PC-9 (cell line): ENCODE measurements at regions of chr9 and their contacts with region 1.

Region 1: DNA sequence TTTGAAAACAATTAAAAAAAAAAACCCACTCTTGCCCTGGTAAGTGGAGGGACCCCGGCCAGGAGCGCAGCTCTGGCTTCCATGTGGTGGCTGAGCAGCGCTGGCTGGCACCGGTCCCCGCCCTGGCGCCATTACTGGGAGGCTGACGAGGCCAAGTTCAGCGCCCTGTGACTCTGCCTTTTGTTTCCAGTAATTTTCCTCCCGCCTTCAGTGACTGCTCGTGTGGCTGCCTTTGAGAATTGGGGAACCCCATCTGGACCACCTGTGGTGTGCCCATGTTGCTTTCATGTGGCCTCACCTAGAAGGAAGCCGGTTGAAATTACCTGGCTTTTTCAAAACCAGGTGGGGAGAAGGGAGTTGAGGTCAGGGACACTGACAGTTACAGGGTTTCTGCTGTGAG is 136.1 kb downstream of the GAPVD1 start:
- DNase-seq: no peak
- H3K4me3 ChIP-seq: no peak overlapping the region
- H3K27ac ChIP-seq: no peak overlapping the region
- H3K4me1 ChIP-seq: no peaks in the 10 kb centered on the region
- H3K27me3 ChIP-seq: no peaks in the 10 kb centered on the region
- CTCF ChIP-seq: no peak

Region 2: GRCh38 chr9:125189361-125190289 is 208.1 kb before region 1 on chr9 and contains the start of gene PPP6C:
- CTCF ChIA-PET with region 1: no interaction called
- POLR2A ChIA-PET with region 1: interaction called, 10 read pairs
- intact Hi-C with region 1: no loop called
- DNase-seq: peak; percentile 83 to 97
- H3K4me3 ChIP-seq: peak within 1 kb of the TSS; percentile 99
- H3K27ac ChIP-seq: peak within 1 kb of the TSS; percentile 60
- H3K4me1 ChIP-seq: peaks cover 13% of the 10 kb centered on the region
- H3K27me3 ChIP-seq: no peaks in the 10 kb centered on the region
- CTCF ChIP-seq: peak; percentile 53; the same call in 1 of the 2 replicates
- total RNA-seq, gene PPP6C: 34.6 and 49.6 TPM in 2 replicates

Region 3: GRCh38 chr9:125317704-125318103 is 80.0 kb before region 1 on chr9:
- CTCF ChIA-PET with region 1: no interaction called
- POLR2A ChIA-PET with region 1: no interaction called
- intact Hi-C with region 1: no loop called
- DNase-seq: no peak
- H3K4me3 ChIP-seq: no peak overlapping the region
- H3K27ac ChIP-seq: no peak overlapping the region
- H3K4me1 ChIP-seq: no peaks in the 10 kb centered on the region
- H3K27me3 ChIP-seq: no peaks in the 10 kb centered on the region
- CTCF ChIP-seq: no peak

Region 4: DNA sequence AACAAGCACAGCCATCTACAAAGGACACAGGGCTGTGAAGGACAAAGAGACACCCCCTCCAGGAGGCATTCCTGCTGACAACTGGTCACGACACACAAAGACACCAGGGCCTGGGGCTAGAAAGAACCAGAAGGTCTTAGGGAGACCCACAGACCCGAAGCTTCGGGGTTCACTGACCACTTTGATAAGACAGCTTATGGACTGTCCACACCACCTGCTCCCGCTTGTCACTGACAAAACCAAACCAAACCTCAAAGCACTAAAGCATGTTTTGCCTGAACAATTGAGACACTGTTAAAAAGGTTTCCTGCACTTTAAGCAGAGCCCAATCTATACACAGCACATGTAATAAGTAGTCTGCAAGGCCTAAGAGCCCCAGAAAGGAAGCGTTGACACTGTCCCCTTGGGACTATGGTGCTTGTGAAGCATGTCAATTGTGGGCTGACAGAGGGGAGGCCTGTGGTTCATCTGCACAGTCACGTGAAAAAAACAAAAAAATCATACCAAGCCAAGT is 48.9 kb after region 1 on chr9:
- CTCF ChIA-PET with region 1: no interaction called
- POLR2A ChIA-PET with region 1: no interaction called
- intact Hi-C with region 1: loop called (anchors 2 kb)
- DNase-seq: no peak
- H3K4me3 ChIP-seq: no peak overlapping the region
- H3K27ac ChIP-seq: no peak overlapping the region
- H3K4me1 ChIP-seq: peaks cover 7% of the 10 kb centered on the region
- H3K27me3 ChIP-seq: no peaks in the 10 kb centered on the region
- CTCF ChIP-seq: no peak